ENCODE measurements at regions of chr11 and their contacts with region 1.

Region 1: GRCh38 chr11:95849087-95849825 is 59.0 kb downstream of the CEP57 start:
- DNase-seq: peak in 6 of 9 donors; percentile 2 to 39 (median 19)
- ATAC-seq: peak; percentile 64
- H3K4me3 ChIP-seq: no peak overlapping the region
- H3K4me3 Mint-ChIP-seq: no peak overlapping the region
- H3K27ac ChIP-seq: no peak overlapping the region
- H3K27ac Mint-ChIP-seq: peak overlapping the region in 2 of 9 donors; percentile 11 to 49
- H3K4me1 ChIP-seq: no peaks in the 10 kb centered on the region
- H3K4me1 Mint-ChIP-seq: no peaks in the 10 kb centered on the region
- H3K27me3 ChIP-seq: no peaks in the 10 kb centered on the region
- H3K27me3 Mint-ChIP-seq: no peaks in the 10 kb centered on the region

Region 2: GRCh38 chr11:95821640-95822039 is 27.6 kb before region 1 on chr11:
- CTCF ChIA-PET with region 1: no interaction called
- POLR2A ChIA-PET with region 1: no interaction called
- intact Hi-C with region 1: no loop called
- DNase-seq: no peak
- ATAC-seq: no peak
- H3K4me3 ChIP-seq: no peak overlapping the region
- H3K4me3 Mint-ChIP-seq: no peak overlapping the region
- H3K27ac ChIP-seq: no peak overlapping the region
- H3K27ac Mint-ChIP-seq: peak overlapping the region in 1 of 9 donors; percentile 75
- H3K4me1 ChIP-seq: no peaks in the 10 kb centered on the region
- H3K4me1 Mint-ChIP-seq: no peaks in the 10 kb centered on the region
- H3K27me3 ChIP-seq: no peaks in the 10 kb centered on the region
- H3K27me3 Mint-ChIP-seq: no peaks in the 10 kb centered on the region

Region 3: GRCh38 chr11:95835768-95836488 is 13.3 kb before region 1 on chr11:
- CTCF ChIA-PET with region 1: interaction called, 10 read pairs
- POLR2A ChIA-PET with region 1: interaction called, 3 read pairs
- intact Hi-C with region 1: no loop called
- DNase-seq: peak; percentile 17 to 67 (median 49)
- ATAC-seq: peak; percentile 96
- H3K4me3 ChIP-seq: no peak overlapping the region
- H3K4me3 Mint-ChIP-seq: no peak overlapping the region
- H3K27ac ChIP-seq: no peak overlapping the region
- H3K27ac Mint-ChIP-seq: peak overlapping the region in 4 of 9 donors; percentile 17 to 65 (median 28)
- H3K4me1 ChIP-seq: no peaks in the 10 kb centered on the region
- H3K4me1 Mint-ChIP-seq: peaks cover 0 to 5% (median 0%) of the 10 kb centered on the region in 7 donors
- H3K27me3 ChIP-seq: no peaks in the 10 kb centered on the region
- H3K27me3 Mint-ChIP-seq: no peaks in the 10 kb centered on the region

Region 4: DNA sequence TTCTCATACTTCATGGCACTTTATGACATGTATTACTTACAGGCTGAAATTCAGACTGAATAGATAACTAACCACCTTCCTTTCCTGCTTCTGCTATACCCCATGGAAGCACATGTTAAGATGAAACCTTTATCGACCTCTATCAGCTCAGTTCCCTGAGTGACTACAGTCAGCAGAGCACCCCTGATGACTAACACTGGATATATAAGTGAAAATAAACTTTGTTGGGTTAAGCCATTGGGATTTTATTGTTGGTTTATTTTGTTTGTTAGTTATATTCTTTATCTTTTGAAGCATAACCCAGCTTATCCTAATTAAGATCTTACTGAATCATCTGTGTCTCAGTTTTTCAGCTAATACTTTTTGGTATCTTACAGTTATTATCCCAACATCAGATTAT is 516.8 kb after region 1 on chr11:
- CTCF ChIA-PET with region 1: interaction called, 11 read pairs
- POLR2A ChIA-PET with region 1: no interaction called
- intact Hi-C with region 1: no loop called
- DNase-seq: no peak
- ATAC-seq: no peak
- H3K4me3 ChIP-seq: no peak overlapping the region
- H3K4me3 Mint-ChIP-seq: no peak overlapping the region
- H3K27ac ChIP-seq: no peak overlapping the region
- H3K27ac Mint-ChIP-seq: no peak overlapping the region
- H3K4me1 ChIP-seq: no peaks in the 10 kb centered on the region
- H3K4me1 Mint-ChIP-seq: peaks cover 0 to 3% (median 0%) of the 10 kb centered on the region in 7 donors
- H3K27me3 ChIP-seq: no peaks in the 10 kb centered on the region
- H3K27me3 Mint-ChIP-seq: no peaks in the 10 kb centered on the region